Endothelial cell of umbilical vein (primary cell): ENCODE measurements at regions of chr6 and their contacts with region 1.

Region 1: GRCh38 chr6:149431905-149432775 is 32.1 kb downstream of the SUMO4 start:
- DNase-seq: peak; percentile 70
- H3K4me3 ChIP-seq: no peak overlapping the region
- H3K27ac ChIP-seq: no peak overlapping the region
- H3K4me1 ChIP-seq: no peaks in the 10 kb centered on the region
- H3K27me3 ChIP-seq: no peaks in the 10 kb centered on the region
- CTCF ChIP-seq: peak; percentile 91
- POLR2A ChIP-seq: no peak

Region 2: DNA sequence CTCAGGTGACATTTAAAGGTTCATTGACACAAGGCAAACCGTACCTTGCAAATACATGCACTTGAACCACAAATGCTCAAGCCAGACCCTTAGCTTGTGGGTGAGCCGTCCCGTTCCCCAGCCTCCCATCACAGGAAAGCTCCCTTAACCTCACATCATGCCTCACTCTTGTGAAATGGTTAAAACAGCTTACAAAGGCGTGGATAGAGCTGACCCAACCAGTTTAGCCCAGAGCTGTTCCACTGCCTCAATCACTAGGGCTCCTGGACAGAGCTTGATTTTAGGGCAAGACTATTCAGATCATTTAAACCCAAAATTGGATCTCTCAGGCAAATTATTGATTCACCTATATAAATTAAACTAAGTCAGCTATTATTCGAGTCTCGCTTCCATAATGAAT is 344.2 kb before region 1 on chr6:
- CTCF ChIA-PET with region 1: interaction called, 204 read pairs
- POLR2A ChIA-PET with region 1: no interaction called
- dilution Hi-C with region 1: no loop called
- intact Hi-C with region 1: no loop called
- DNase-seq: no peak
- H3K4me3 ChIP-seq: no peak overlapping the region
- H3K27ac ChIP-seq: no peak overlapping the region
- H3K4me1 ChIP-seq: no peaks in the 10 kb centered on the region
- H3K27me3 ChIP-seq: peaks cover 18 to 25% of the 10 kb centered on the region in 2 experiments
- CTCF ChIP-seq: no peak
- POLR2A ChIP-seq: no peak

Region 3: DNA sequence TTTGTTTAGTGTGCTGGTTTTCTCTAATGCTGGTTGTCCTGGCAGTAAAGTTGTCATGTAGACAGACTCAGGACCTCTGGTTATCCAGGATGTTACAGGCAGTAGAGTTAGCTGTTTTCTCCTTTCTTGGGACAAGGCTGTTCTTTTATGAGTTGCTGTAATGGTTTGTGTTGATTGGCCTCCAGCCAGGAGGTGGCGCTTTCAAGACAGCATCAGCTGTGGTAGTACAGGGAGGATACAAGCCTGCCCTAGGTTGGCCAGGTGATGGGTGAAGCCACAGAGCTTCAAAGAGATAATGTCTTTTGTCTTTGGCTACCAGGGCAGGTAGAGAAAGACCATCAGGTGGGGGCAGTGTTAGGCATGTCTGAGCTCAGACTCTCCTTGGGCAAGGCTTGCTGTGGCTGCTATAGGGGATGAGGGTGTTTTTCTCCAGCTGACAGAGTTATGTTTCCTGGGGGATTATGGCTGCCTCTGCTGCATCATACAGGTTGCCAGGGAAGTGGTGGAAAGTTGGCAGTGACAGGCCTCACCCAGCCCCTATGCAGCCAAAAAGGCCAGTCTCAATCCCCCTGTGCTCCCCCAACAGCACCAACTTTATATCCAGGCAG is 241.8 kb before region 1 on chr6:
- CTCF ChIA-PET with region 1: interaction called, 58 read pairs
- POLR2A ChIA-PET with region 1: no interaction called
- dilution Hi-C with region 1: no loop called
- intact Hi-C with region 1: loop called (anchors 1 kb)
- DNase-seq: peak; percentile 38
- H3K4me3 ChIP-seq: no peak overlapping the region
- H3K27ac ChIP-seq: no peak overlapping the region
- H3K4me1 ChIP-seq: no peaks in the 10 kb centered on the region
- H3K27me3 ChIP-seq: no peaks in the 10 kb centered on the region
- CTCF ChIP-seq: peak; percentile 8 to 13
- POLR2A ChIP-seq: no peak

Region 4: DNA sequence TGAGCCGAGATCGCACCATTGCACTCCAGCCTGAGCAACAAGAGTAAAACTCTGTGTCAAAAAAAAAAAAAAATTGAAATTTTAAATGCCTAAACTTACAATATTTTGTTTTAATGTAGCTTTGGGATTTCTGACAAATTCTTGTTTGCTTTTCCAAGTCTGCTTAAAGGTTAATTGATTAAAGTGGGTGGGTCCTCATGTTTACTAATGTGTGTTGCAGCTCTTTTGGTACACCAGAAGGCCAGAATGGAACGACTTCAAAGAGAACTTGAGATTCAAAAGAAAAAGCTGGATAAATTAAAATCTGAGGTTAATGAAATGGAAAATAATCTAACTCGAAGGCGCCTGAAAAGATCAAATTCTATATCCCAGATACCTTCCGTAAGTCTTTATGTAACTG is 34.8 kb before region 1 on chr6:
- CTCF ChIA-PET with region 1: interaction called, 11 read pairs
- POLR2A ChIA-PET with region 1: no interaction called
- dilution Hi-C with region 1: no loop called
- intact Hi-C with region 1: no loop called
- DNase-seq: no peak
- H3K4me3 ChIP-seq: no peak overlapping the region
- H3K27ac ChIP-seq: no peak overlapping the region
- H3K4me1 ChIP-seq: no peaks in the 10 kb centered on the region
- H3K27me3 ChIP-seq: no peaks in the 10 kb centered on the region
- CTCF ChIP-seq: no peak
- POLR2A ChIP-seq: no peak

Region 5: DNA sequence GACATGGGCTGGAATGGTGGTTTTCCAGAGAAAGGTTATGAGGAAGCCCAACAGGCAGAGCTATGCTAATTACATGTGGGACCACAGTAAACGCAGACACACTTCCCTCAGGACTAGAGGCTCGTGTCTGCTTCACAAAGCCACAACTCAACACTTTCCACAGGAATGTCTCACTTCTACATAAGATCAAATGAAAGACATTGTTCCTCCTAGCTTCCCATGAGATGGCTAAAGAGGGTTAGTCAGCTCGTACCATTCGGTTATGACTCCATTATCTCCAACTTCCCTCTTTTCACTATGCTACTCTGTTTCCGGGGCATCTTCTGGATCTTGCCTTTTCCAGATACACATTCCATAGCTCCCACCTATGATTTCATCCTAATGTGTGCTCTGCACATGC is 81.8 kb after region 1 on chr6:
- CTCF ChIA-PET with region 1: interaction called, 7 read pairs
- POLR2A ChIA-PET with region 1: no interaction called
- dilution Hi-C with region 1: no loop called
- intact Hi-C with region 1: loop called (anchors 1 kb)
- DNase-seq: no peak
- H3K4me3 ChIP-seq: no peak overlapping the region
- H3K27ac ChIP-seq: no peak overlapping the region
- H3K4me1 ChIP-seq: no peaks in the 10 kb centered on the region
- H3K27me3 ChIP-seq: no peaks in the 10 kb centered on the region
- CTCF ChIP-seq: no peak
- POLR2A ChIP-seq: no peak